GM18951 (cell line): ENCODE measurements at regions of chr12 and their contacts with region 1.

Region 1: GRCh38 chr12:15276088-15276698 is 46.1 kb upstream of the PTPRO start:
- POLR2A ChIP-seq: no peak

Region 2: DNA sequence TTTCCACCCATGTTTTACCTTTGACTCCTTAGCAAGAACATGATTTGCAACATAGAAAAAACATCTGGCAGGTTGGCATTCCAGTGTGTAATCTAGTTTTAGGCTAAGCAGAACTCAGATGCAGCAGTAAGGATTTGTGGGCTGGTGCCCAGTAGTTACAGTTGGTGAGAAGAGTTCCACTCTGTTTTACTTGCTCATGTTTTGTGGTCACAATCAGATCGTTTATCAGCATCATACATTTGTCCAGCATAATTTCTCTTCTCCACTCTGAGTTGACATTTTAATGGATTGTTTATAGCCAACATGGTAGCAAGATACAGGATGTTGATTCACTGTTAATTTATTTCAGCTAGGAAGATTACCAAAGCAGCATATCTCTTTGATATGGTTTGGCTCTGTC is 183.4 kb before region 1 on chr12:
- in situ Hi-C with region 1: no loop called
- POLR2A ChIP-seq: no peak

Region 3: GRCh38 chr12:15522565-15523187 is 246.5 kb after region 1 on chr12:
- in situ Hi-C with region 1: loop called (anchors 10 kb)
- POLR2A ChIP-seq: no peak

Region 4: DNA sequence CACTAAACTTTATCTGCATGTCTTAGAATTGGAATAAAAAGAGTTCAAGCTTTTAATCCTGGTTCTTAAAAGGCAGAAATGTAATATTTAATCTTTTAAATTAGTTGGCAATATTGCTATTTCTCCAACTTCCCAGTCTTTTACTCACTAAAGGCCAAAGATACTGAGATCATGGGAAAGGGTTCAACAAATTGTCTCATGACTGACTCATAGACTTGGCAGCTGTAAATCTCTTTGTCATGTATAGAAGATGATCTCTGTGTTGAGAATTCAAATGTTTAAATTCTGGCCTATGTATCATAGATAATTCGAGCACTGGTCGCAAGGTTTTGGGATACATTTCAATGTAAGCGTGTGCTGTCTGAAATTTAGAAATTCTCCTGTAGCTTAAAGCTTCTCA is 565.9 kb after region 1 on chr12:
- in situ Hi-C with region 1: loop called (anchors 25 kb)
- POLR2A ChIP-seq: no peak